GM10248 (cell line): ENCODE measurements at regions of chr15 and their contacts with region 1.

Region 1: DNA sequence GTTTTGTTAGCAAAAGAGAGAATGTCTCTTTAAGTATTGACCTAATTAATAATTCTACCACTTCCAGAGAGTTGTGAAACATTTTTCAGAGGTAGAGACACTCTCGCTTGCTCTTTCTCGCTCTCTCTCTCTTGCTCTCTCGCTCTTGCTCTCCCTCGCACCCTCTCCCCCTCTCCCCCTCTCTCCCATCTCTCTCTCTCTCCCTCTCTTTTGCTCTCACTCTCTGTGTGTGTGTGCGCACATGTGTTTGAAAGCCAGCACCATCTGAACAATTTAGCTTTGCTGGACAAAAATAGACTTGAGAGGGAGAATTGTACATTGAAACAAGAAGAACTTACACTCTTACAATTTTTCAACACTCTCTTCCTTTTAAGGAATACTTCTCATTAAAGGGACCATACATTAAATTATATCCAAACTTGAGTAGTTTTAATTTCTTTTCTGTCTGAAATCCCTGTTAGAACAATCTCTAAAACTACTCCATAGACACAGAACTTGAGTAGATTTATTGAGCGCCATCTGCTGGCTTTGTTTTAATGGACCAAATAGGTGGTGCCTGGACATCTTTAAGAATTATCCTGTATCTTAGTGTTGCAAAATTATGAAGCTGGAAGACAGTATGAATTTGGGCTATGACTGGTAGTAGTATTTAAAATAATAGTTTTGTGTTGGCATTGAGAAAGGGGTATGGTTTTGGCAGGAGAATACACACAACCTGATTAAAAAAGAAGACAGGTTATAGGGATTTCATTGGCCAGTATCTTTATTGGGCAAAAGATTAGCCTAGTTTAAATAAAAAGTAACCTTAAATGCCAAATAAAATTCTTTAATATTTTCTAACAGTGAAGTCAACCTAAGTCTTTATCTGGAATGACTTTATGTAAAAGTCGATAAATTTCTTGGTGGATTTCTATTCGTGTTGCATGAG is 124.6 kb downstream of the AKAP13 start:
- DNase-seq: peak; percentile 32
- CTCF ChIP-seq: peak; percentile 67

Region 2: DNA sequence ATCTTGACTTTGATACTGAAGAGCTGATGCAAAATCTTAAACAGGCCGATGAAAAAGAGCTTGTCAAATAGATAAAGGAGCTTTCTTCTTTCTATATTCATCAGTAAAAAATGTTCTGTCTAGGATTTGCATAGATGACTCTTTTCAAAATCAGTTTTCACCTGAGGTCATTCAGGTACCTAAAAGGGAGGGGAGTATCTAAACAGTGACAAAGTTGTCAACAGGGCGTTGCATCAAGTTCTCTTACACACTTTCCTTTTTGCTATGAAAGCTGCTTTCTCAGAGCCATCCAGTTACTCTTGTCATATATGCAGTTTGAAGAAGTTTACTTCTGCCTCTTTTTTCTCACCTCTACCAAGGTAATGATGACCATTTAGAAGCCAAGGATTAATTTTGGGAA is 64.6 kb before region 1 on chr15:
- CTCF ChIA-PET with region 1: no interaction called
- POLR2A ChIA-PET with region 1: no interaction called
- DNase-seq: no peak
- CTCF ChIP-seq: no peak

Region 3: DNA sequence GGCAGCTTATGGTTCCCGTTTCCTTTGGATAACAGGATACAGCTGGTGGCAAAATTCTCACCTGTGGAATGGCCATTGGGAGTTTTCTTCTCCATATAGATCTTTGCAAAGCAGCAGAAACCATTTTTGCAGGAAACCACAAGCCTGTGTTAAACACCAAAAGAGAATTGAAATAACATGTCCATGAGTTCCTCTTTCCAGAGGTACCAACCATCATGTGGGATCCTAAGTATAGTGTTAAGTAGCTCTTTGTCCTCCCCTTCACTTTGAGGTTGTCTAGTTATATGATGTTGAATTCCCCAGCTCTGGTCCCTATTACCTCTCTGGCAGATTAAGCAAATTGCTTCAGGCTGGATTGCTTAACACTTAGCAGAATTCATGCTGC is 29.7 kb before region 1 on chr15:
- CTCF ChIA-PET with region 1: interaction called, 13 read pairs
- POLR2A ChIA-PET with region 1: no interaction called
- DNase-seq: peak; percentile 31
- CTCF ChIP-seq: no peak

Region 4: DNA sequence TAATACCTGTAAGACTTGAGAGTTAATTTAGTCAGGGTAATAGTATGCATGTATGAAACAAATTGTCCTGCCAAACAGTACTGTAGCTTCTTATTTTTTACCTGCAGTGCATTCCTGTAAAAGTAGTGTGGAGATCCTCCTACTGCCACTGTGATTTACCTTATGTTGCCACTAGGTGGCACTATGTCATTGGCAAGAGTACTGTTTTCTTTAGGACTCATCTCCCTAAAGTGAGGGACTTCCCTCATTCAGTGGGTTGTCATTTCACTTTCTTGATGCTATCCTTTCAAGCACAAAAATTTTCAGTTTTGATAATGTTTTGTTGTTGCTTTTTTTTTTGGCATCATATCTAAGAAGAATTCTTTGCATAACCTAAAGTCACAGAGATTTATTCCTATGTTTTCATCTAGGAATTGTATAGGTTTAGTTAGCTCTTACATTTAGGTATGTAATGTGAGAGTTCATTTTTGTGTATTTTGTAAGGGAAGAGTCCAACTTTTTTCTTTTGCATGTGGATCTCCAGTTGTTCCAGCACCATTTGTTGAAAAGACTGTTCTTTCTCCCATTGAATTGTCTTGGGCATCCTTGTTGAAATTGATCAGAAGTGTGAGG is 19.0 kb before region 1 on chr15:
- CTCF ChIA-PET with region 1: interaction called, 53 read pairs
- POLR2A ChIA-PET with region 1: no interaction called
- DNase-seq: peak; percentile 73
- CTCF ChIP-seq: peak; percentile 57

Region 5: DNA sequence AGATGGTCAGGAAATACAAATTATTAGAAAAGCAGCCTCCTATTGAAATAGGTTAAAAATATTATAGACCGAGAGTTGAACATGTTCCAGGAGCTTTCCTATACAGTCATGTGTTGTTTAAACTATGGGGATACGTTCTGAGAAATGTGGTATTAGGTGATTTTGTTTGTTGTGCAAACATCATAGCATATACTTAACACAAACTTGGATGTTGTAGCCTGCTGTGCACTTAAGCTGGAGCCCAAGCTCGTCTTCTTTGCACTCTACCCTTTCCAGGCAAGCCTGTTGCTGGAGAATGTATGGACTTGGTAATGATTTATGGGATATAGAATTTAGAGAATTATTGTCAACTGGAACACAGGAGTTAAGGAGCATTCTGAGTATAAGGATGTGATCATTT is 15.6 kb after region 1 on chr15:
- CTCF ChIA-PET with region 1: interaction called, 19 read pairs
- POLR2A ChIA-PET with region 1: no interaction called
- DNase-seq: no peak
- CTCF ChIP-seq: no peak

Region 6: DNA sequence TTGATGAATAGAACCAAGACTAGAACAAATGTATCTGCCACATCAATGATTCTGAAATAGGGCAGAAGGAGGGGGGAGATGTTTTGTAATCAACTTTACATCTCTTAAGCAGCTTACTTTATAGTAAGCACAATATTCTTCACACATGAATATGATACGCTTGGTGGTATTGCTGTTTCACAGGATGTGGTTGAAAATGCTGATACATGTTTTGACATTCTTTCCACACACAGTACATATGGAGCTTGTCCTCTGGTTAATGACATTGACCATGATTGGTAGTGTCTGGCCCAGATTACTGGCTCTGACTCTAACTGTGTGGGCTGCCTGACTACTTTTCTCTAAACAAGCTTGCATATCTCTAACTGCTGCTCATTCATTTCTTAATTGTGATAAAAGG is 120.8 kb after region 1 on chr15:
- CTCF ChIA-PET with region 1: no interaction called
- POLR2A ChIA-PET with region 1: no interaction called
- DNase-seq: no peak
- CTCF ChIP-seq: no peak

Region 7: DNA sequence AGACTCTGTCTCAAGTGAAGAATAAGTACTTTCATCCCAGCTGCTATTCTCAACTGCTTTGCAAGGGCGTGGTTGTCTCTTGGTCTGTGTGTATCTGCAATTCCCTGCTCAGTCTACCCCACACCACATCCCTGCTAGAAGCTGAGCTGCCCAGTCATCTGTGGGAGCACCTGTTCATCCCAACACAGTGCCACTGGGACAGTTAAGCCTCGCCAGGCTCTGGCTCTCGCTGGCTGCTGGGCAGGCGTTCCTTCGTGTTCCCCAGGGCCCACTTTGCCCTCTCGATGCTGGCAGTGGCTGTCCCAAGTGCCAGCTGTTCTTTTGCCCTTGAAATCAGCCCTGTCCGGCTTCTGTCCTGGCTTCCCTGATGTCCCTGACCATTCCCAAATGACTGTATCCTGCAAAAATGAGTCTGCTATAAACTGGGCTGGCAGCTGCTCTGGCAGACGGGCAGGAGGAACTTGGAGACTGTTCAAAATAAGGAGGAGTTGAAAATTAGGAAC is 381.3 kb after region 1 on chr15:
- CTCF ChIA-PET with region 1: no interaction called
- POLR2A ChIA-PET with region 1: no interaction called
- DNase-seq: no peak
- CTCF ChIP-seq: no peak